ENCODE measurements at regions of chr2 and their contacts with region 1.

Region 1: DNA sequence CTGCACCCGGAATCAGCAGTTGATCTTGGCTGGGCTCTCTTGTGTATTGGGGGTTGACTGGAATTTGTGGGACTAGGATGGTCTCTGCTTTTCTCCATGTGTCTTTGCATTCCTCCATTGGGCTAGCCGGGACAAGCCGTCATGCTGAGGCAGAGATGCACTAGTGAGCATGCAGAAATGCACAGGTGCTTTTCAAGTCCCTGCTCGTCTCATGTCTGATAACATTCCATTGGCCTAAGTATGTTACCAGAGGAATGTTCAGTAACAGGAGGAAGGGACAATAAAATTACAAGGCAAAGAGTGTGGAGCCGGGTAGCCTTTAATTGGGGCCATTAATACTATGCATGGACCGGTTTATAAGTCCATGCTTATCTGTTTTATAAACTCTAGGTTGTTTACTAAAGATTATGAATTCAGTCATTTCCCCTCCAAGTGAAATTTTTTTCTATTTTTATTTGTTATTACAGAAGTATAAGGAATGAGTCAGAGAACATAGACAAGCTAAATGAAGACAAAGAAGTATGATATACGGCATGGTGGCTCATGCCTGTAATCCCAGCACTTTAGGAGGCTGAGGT is 24.4 kb upstream of the AAK1 start:
- DNase-seq: peak; percentile 88
- H3K4me3 ChIP-seq: peak overlapping the region in 1 of 3 experiments; percentile 26
- H3K27ac ChIP-seq: peak overlapping the region; percentile 83
- H3K4me1 ChIP-seq: peaks cover 17% of the 10 kb centered on the region
- H3K27me3 ChIP-seq: no peaks in the 10 kb centered on the region
- CTCF ChIP-seq: no peak
- POLR2A ChIP-seq: no peak

Region 2: GRCh38 chr2:69628325-69629021 is 39.4 kb before region 1 on chr2:
- CTCF ChIA-PET with region 1: no interaction called
- POLR2A ChIA-PET with region 1: no interaction called
- dilution Hi-C with region 1: no loop called
- intact Hi-C with region 1: no loop called
- DNase-seq: no peak
- H3K4me3 ChIP-seq: no peak overlapping the region
- H3K27ac ChIP-seq: no peak overlapping the region
- H3K4me1 ChIP-seq: peaks cover 2% of the 10 kb centered on the region
- H3K27me3 ChIP-seq: no peaks in the 10 kb centered on the region
- CTCF ChIP-seq: no peak
- POLR2A ChIP-seq: no peak

Region 3: GRCh38 chr2:69683101-69683971 is 15.4 kb after region 1 on chr2:
- CTCF ChIA-PET with region 1: interaction called, 9 read pairs
- POLR2A ChIA-PET with region 1: interaction called, 5 read pairs
- dilution Hi-C with region 1: no loop called
- intact Hi-C with region 1: loop called (anchors 1 kb)
- DNase-seq: peak; percentile 98
- H3K4me3 ChIP-seq: peak overlapping the region in 1 of 3 experiments; percentile 39
- H3K27ac ChIP-seq: peak overlapping the region; percentile 87
- H3K4me1 ChIP-seq: peaks cover 36% of the 10 kb centered on the region
- H3K27me3 ChIP-seq: no peaks in the 10 kb centered on the region
- CTCF ChIP-seq: no peak
- POLR2A ChIP-seq: peak; percentile 80